ENCODE measurements at regions of chr17 and their contacts with region 1.

Region 1: GRCh38 chr17:55421179-55421934 is at the start of gene MMD:
- DNase-seq: peak in 3 of 5 donors; percentile 37 to 61 (median 45)
- ATAC-seq: peak in 3 of 4 donors; percentile 4 to 16 (median 8)
- H3K4me3 ChIP-seq: peak within 1 kb of the TSS; percentile 69 to 99 (median 96)
- H3K27ac ChIP-seq: peak within 1 kb of the TSS; percentile 63 to 96 (median 91)
- H3K4me1 ChIP-seq: peaks cover 0 to 38% (median 16%) of the 10 kb centered on the region in 12 donors
- H3K27me3 ChIP-seq: peaks cover 0 to 7% (median 0%) of the 10 kb centered on the region in 9 donors
- CTCF ChIP-seq: no peak
- POLR2A ChIP-seq: peak; percentile 57 to 68
- total RNA-seq, gene MMD: 8.8 to 25.0 (median 12.5) TPM

Region 2: DNA sequence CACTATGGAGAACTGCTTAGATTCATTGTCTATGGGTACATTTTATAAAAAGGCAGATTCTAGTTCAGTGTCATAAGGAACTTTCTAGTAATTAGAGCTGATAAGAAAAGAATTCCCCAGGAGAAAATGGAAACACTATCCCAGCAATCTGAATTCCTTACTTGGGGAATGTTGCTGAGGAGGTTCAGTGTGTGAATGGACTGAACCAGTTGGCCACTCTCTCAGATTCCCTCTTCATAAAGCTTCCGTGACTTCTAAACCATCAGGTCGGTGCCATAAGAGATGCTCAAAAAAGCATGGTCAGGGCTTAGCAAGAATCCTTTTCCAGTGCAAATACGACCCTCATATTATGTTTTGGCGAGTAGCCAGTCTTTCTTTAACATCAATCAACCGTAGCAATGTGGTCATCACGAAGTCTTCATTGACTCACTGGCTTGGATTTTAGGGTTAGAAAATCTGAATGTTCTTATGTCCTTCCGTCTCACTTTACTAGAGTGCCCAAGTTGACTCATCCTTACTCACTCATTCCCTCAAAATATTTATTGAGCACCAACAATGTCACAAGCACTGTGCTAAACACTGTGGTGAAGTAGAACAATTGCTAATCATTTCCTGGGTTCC is 259.3 kb before region 1 on chr17:
- intact Hi-C with region 1: no loop called
- DNase-seq: no peak
- ATAC-seq: no peak
- H3K4me3 ChIP-seq: no peak overlapping the region
- H3K27ac ChIP-seq: no peak overlapping the region
- H3K4me1 ChIP-seq: no peaks in the 10 kb centered on the region
- H3K27me3 ChIP-seq: no peaks in the 10 kb centered on the region
- CTCF ChIP-seq: no peak
- POLR2A ChIP-seq: no peak

Region 3: DNA sequence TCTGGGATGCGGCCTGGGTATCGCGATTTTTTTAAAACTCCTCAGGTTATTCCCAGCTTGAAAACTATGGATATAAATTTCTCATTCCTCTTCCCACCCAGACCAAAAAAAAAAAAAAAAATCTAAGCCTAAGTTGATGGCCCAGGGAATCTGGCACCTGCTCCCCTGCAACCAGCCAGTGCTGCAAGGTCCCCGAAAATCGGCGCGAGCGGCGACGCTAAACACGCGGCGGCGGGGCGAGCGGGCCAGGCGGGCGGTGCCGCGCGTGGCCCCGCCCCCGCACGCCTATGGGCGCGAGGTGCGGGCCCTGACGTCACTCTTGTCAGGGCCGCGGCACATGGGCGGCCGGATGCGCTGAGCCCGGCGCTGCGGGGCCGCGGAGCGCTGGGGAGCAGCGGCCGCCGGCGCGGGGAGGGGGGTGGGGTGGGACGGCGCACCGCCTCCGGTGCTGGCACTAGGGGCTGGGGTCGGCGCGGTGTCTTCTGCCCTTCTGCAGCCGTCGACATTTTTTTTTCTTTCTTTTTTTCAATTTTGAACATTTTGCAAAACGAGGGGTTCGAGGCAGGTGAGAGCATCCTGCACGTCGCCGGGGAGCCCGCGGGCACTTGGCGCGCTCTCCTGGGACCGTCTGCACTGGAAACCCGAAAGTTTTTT is 156.6 kb before region 1 on chr17 and contains the start of gene HLF:
- intact Hi-C with region 1: loop called in 1 of 10 experiments (anchors 10 kb)
- DNase-seq: peak; percentile 81 to 90 (median 87)
- ATAC-seq: peak; percentile 86 to 98 (median 93)
- H3K4me3 ChIP-seq: peak within 1 kb of the TSS; percentile 50 to 89 (median 68)
- H3K27ac ChIP-seq: peak within 1 kb of the TSS; percentile 36 to 94 (median 82)
- H3K4me1 ChIP-seq: peaks cover 0 to 52% (median 34%) of the 10 kb centered on the region in 12 donors
- H3K27me3 ChIP-seq: peaks cover 0 to 60% (median 0%) of the 10 kb centered on the region in 9 donors
- CTCF ChIP-seq: no peak
- POLR2A ChIP-seq: peak in 1 of 2 donors; percentile 55
- total RNA-seq, gene HLF: 7.5 to 46.3 (median 28.7) TPM

Region 4: DNA sequence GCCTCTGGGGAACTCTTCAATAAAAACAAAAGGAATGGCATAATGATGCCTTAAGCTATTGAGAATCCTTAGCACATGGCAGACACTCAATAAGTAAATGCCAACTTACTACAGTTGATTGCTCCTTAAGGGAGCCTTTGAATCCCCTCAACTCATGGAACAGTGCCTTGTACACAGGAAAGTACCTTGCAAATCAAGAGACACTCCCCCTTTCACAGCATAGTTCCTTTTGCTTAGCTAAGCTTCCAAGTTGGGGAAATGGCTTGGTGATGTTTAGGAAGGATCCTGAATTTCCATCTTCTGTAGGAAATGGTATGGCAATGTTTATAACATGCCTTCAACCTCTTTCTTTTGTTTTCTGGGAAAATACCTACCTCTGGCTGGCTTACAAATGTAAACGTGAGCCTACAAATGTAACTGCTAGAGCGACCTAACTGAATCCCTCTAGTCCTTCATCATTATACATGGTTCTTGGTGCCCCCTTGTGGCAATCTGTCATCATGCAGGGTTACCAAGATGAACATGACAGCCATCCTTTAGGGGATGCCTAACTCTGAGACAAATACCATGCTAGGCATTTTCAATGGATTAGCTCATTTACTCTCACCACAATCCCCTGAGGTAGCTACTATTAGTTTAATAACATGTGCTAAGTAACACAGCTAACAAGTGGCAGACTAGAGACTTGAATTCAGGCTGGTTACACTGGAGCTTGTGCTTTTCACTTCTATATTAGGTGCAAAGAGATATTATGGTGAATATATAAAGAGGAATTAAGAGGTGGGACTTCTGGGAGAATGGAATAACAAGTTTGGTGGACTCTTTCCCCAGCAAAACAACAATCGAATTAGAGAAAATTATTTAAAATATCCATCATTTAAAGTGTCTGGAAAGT is 64.7 kb before region 1 on chr17:
- intact Hi-C with region 1: loop called in 1 of 10 experiments (anchors 10 kb)
- DNase-seq: peak in 4 of 5 donors; percentile 39 to 70 (median 53)
- ATAC-seq: peak in 3 of 4 donors; percentile 68 to 85 (median 75)
- H3K4me3 ChIP-seq: no peak overlapping the region
- H3K27ac ChIP-seq: no peak overlapping the region
- H3K4me1 ChIP-seq: no peaks in the 10 kb centered on the region
- H3K27me3 ChIP-seq: no peaks in the 10 kb centered on the region
- CTCF ChIP-seq: peak; percentile 67 to 84 (median 76)
- POLR2A ChIP-seq: no peak

Region 5: GRCh38 chr17:55513885-55514591 is 92.7 kb after region 1 on chr17:
- intact Hi-C with region 1: loop called in 5 of 10 experiments (anchors 5 to 10 kb)
- DNase-seq: peak in 4 of 5 donors; percentile 42 to 63 (median 58)
- ATAC-seq: peak in 3 of 4 donors; percentile 53 to 63 (median 58)
- H3K4me3 ChIP-seq: no peak overlapping the region
- H3K27ac ChIP-seq: no peak overlapping the region
- H3K4me1 ChIP-seq: peaks cover 0 to 8% (median 0%) of the 10 kb centered on the region in 12 donors
- H3K27me3 ChIP-seq: peaks cover 0 to 6% (median 0%) of the 10 kb centered on the region in 9 donors
- CTCF ChIP-seq: peak; percentile 86 to 98 (median 92)
- POLR2A ChIP-seq: no peak

Region 6: DNA sequence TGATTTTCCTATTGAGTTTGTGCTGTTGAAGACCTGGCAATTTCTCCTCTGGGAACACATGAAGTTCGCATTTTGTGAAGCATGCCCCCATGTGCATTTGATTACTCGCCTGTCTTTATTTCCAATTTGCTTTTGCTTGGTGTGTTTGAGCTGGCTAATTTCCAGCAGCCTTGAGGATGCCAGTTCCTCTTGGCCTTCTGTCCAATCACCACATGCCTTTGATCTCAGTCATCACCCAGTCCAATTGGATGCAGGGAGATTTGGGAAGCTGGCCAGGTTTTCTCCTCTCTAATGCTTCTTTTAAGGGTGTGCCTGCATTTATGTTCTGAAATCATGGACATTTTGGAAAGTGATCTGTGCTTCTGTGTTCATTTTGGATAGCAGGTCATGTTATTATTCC is 305.1 kb after region 1 on chr17:
- intact Hi-C with region 1: loop called in 1 of 10 experiments (anchors 10 kb)
- DNase-seq: peak in 4 of 5 donors; percentile 58 to 77 (median 68)
- ATAC-seq: peak; percentile 31 to 65 (median 49)
- H3K4me3 ChIP-seq: no peak overlapping the region
- H3K27ac ChIP-seq: peak overlapping the region in 4 of 12 donors; percentile 1 to 78 (median 22)
- H3K4me1 ChIP-seq: peaks cover 0 to 56% (median 24%) of the 10 kb centered on the region in 12 donors
- H3K27me3 ChIP-seq: no peaks in the 10 kb centered on the region
- CTCF ChIP-seq: no peak
- POLR2A ChIP-seq: no peak